HCT116 (cell line): ENCODE measurements at regions of chr10 and their contacts with region 1.

Region 1: DNA sequence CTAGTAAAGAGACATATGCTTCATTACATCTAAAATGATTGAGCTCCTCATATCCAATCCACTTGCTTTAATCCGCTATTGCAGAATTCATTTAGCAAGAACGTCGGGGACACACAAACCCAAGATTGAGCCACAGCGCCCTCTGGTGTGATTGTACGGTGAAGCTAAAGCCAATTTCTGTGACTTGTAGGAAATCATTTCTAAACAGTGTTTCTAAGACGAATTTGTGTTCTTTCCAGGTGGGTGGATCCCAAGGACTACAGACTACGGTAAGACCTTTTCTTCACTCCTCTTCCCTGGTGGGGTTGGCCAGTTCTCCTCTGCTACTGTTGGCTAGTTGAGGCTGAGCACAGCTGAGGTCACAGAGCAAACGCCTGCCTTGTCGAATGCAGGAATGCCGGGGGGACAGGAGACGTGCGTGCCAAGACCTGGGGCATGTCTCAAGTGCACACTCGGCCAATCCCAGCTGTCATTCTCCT is 5.2 kb downstream of the DMBT1 start:
- DNase-seq: peak; percentile 85
- ATAC-seq: peak; percentile 79
- H3K4me3 ChIP-seq: peak overlapping the region; percentile 25 to 38
- H3K27ac ChIP-seq: no peak overlapping the region
- H3K4me1 ChIP-seq: peaks cover 0 to 4% of the 10 kb centered on the region in 2 experiments; a peak in 1 of 4 replicates
- H3K27me3 ChIP-seq: peaks cover 47% of the 10 kb centered on the region
- CTCF ChIP-seq: peak; percentile 88 to 98 (median 96)
- POLR2A ChIP-seq: no peak
- RAD21 ChIP-seq: peak; percentile 99

Region 2: DNA sequence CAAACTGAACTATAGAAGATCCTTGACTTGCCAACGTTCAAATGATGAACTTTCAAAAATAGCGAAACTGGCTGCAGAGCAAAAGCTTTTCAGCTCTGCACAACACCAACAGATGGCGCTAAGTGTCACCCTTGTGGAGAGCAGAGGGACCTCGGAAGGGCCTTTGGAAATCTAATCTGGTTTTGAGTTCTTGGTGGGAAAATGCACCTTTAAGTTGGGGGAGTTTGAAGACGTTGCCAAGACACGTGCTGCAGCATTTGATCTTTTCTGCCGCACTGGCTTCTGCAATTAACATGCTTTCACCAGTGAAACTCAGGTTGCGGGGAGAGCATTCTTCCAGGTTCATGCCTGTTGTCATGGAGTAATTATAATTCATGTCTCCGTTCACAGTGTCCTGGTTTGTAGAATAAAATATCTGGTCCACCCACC is 1740.9 kb before region 1 on chr10:
- CTCF ChIA-PET with region 1: no interaction called
- POLR2A ChIA-PET with region 1: no interaction called
- RAD21 ChIA-PET with region 1: no interaction called
- intact Hi-C with region 1: no loop called
- DNase-seq: peak; percentile 54
- ATAC-seq: peak; percentile 92
- H3K4me3 ChIP-seq: no peak overlapping the region
- H3K27ac ChIP-seq: no peak overlapping the region
- H3K4me1 ChIP-seq: no peaks in the 10 kb centered on the region
- H3K27me3 ChIP-seq: peaks cover 15% of the 10 kb centered on the region; the same call in 1 of the 2 replicates
- CTCF ChIP-seq: peak; percentile 56 to 97 (median 93)
- POLR2A ChIP-seq: no peak
- RAD21 ChIP-seq: peak; percentile 65

Region 3: DNA sequence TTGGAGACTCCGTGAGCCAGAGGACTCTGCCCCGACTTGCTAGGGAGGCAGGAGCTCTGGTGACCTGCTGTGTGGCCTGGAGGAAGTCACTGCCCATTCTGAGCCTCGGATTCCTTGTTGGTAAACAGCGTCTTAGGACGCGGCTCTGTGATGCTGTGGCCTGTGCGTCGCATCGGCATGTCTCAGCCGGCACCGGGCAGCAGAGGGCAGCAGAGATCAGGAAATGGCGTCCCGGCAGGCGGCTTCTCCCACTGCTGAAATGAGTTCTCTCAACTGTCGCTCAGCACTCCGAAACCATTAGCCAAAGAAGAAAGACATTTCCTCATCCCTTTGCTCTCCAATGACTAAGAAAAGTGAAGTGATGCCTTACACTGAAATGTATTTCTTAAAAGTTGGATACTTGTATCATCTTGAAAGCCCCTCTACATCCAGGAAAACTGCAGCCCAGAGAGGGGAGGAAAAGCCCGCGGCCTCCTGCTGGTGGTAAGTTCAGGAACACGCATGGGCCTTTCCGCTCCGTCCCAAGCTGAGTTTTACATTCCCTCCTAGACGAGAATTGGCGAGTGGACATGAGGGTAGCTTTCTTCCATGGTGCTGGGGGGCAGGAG is 1622.9 kb before region 1 on chr10:
- CTCF ChIA-PET with region 1: no interaction called
- POLR2A ChIA-PET with region 1: no interaction called
- RAD21 ChIA-PET with region 1: no interaction called
- intact Hi-C with region 1: loop called (anchors 5 kb)
- DNase-seq: peak; percentile 81
- ATAC-seq: peak; percentile 96
- H3K4me3 ChIP-seq: peak overlapping the region; percentile 27 to 48
- H3K27ac ChIP-seq: no peak overlapping the region
- H3K4me1 ChIP-seq: peaks cover 0 to 13% of the 10 kb centered on the region in 2 experiments; a peak in 3 of 4 replicates
- H3K27me3 ChIP-seq: no peaks in the 10 kb centered on the region
- CTCF ChIP-seq: peak; percentile 85 to 96 (median 95)
- POLR2A ChIP-seq: no peak
- RAD21 ChIP-seq: peak; percentile 99

Region 4: GRCh38 chr10:122279725-122280141 is 286.0 kb before region 1 on chr10:
- CTCF ChIA-PET with region 1: interaction called, 39 read pairs
- POLR2A ChIA-PET with region 1: no interaction called
- RAD21 ChIA-PET with region 1: interaction called, 3 to 11 read pairs
- intact Hi-C with region 1: loop called (anchors 1 kb)
- DNase-seq: peak; percentile 70
- ATAC-seq: peak; percentile 87
- H3K4me3 ChIP-seq: no peak overlapping the region
- H3K27ac ChIP-seq: no peak overlapping the region
- H3K4me1 ChIP-seq: peaks cover 3 to 15% of the 10 kb centered on the region in 2 experiments; a peak in 3 of 4 replicates
- H3K27me3 ChIP-seq: no peaks in the 10 kb centered on the region
- CTCF ChIP-seq: peak; percentile 88 to 98 (median 97); a peak in 5 of 6 replicates
- POLR2A ChIP-seq: no peak
- RAD21 ChIP-seq: peak; percentile 98

Region 5: DNA sequence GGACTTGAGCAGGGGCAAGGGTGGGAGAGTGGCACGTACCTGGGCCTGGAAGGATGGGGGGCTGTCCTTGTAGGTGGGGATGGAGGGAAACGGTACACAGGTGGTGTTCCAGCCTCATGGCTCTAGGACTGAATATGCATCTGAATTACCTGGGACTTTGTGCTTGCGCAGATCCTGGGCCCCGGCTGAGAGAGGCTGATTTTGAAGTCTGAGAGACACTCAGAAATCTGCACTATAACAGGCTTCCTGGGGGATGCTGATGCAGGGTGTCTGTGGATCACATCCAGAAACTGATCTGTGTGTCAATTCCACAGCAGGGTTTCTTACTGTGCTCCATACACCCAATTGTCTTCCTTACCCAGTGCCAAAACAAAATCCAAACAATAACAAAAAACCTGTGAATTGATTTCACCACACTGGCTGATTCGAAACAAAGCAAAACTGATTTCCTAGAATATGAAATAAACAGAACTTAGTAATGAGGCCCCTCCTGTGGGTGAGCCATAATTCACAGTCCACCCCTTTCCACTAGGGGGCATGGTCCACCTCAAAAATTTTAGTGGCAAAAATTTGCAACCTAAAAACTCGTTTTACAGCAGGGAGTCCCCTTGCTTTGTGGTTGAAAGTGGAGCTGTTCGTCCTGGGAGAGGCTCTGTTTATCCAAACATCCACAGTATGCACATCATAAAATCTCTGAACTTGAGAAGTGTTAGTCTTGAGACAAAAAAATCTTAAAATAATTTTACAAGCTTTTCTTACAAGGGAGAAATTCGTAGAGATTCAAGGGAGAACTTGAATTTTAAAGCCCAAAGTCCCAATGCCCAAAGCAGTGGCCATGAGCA is 223.3 kb before region 1 on chr10:
- CTCF ChIA-PET with region 1: interaction called, 21 read pairs
- POLR2A ChIA-PET with region 1: no interaction called
- RAD21 ChIA-PET with region 1: interaction called in 1 of 2 experiments, 8 read pairs
- intact Hi-C with region 1: loop called (anchors 2 kb)
- DNase-seq: peak; percentile 39
- ATAC-seq: peak; percentile 73
- H3K4me3 ChIP-seq: no peak overlapping the region
- H3K27ac ChIP-seq: no peak overlapping the region
- H3K4me1 ChIP-seq: peaks cover 7 to 17% of the 10 kb centered on the region in 2 experiments
- H3K27me3 ChIP-seq: no peaks in the 10 kb centered on the region
- CTCF ChIP-seq: peak; percentile 90 to 98 (median 90)
- POLR2A ChIP-seq: no peak
- RAD21 ChIP-seq: peak; percentile 89

Region 6: GRCh38 chr10:122388287-122388997 is 177.3 kb before region 1 on chr10:
- CTCF ChIA-PET with region 1: no interaction called
- POLR2A ChIA-PET with region 1: no interaction called
- RAD21 ChIA-PET with region 1: no interaction called
- intact Hi-C with region 1: no loop called
- DNase-seq: no peak
- ATAC-seq: no peak
- H3K4me3 ChIP-seq: no peak overlapping the region
- H3K27ac ChIP-seq: no peak overlapping the region
- H3K4me1 ChIP-seq: no peaks in the 10 kb centered on the region
- H3K27me3 ChIP-seq: no peaks in the 10 kb centered on the region
- CTCF ChIP-seq: no peak
- POLR2A ChIP-seq: no peak
- RAD21 ChIP-seq: no peak

Region 7: GRCh38 chr10:122495406-122496340 is 70.1 kb before region 1 on chr10:
- CTCF ChIA-PET with region 1: interaction called, 15 read pairs
- POLR2A ChIA-PET with region 1: no interaction called
- RAD21 ChIA-PET with region 1: interaction called in 1 of 2 experiments, 4 read pairs
- intact Hi-C with region 1: no loop called
- DNase-seq: peak; percentile 21
- ATAC-seq: peak; percentile 21
- H3K4me3 ChIP-seq: peak overlapping the region; percentile 18 to 47
- H3K27ac ChIP-seq: peak overlapping the region; percentile 23
- H3K4me1 ChIP-seq: peaks cover 11 to 46% of the 10 kb centered on the region in 2 experiments
- H3K27me3 ChIP-seq: no peaks in the 10 kb centered on the region
- CTCF ChIP-seq: no peak
- POLR2A ChIP-seq: no peak
- RAD21 ChIP-seq: no peak

Region 8: GRCh38 chr10:122703439-122704118 is 137.8 kb after region 1 on chr10:
- CTCF ChIA-PET with region 1: no interaction called
- POLR2A ChIA-PET with region 1: no interaction called
- RAD21 ChIA-PET with region 1: no interaction called
- intact Hi-C with region 1: loop called (anchors 1 kb)
- DNase-seq: peak; percentile 47
- ATAC-seq: peak; percentile 99
- H3K4me3 ChIP-seq: no peak overlapping the region
- H3K27ac ChIP-seq: no peak overlapping the region
- H3K4me1 ChIP-seq: no peaks in the 10 kb centered on the region
- H3K27me3 ChIP-seq: peaks cover 15% of the 10 kb centered on the region
- CTCF ChIP-seq: peak; percentile 92 to 99 (median 99)
- POLR2A ChIP-seq: no peak
- RAD21 ChIP-seq: peak; percentile 99

Region 9: GRCh38 chr10:123229927-123230632 is 664.3 kb after region 1 on chr10:
- CTCF ChIA-PET with region 1: no interaction called
- POLR2A ChIA-PET with region 1: no interaction called
- RAD21 ChIA-PET with region 1: no interaction called
- intact Hi-C with region 1: no loop called
- DNase-seq: no peak
- ATAC-seq: no peak
- H3K4me3 ChIP-seq: no peak overlapping the region
- H3K27ac ChIP-seq: no peak overlapping the region
- H3K4me1 ChIP-seq: no peaks in the 10 kb centered on the region
- H3K27me3 ChIP-seq: no peaks in the 10 kb centered on the region
- CTCF ChIP-seq: no peak
- POLR2A ChIP-seq: no peak
- RAD21 ChIP-seq: no peak